ENCODE measurements at regions of chr18 and their contacts with region 1.

Region 1: GRCh38 chr18:45664824-45665763 is 49.8 kb downstream of the SLC14A2 start:
- DNase-seq: peak; percentile 41 to 75 (median 51)
- H3K4me3 ChIP-seq: no peak overlapping the region
- H3K4me3 Mint-ChIP-seq: peak overlapping the region in 5 of 7 donors; percentile 43 to 78 (median 54)
- H3K27ac ChIP-seq: no peak overlapping the region
- H3K27ac Mint-ChIP-seq: peak overlapping the region; percentile 3 to 79 (median 40)
- H3K4me1 ChIP-seq: peaks cover 53% of the 10 kb centered on the region
- H3K4me1 Mint-ChIP-seq: peaks cover 45 to 58% (median 56%) of the 10 kb centered on the region in 3 donors
- H3K27me3 ChIP-seq: no peaks in the 10 kb centered on the region
- H3K27me3 Mint-ChIP-seq: no peaks in the 10 kb centered on the region

Region 2: DNA sequence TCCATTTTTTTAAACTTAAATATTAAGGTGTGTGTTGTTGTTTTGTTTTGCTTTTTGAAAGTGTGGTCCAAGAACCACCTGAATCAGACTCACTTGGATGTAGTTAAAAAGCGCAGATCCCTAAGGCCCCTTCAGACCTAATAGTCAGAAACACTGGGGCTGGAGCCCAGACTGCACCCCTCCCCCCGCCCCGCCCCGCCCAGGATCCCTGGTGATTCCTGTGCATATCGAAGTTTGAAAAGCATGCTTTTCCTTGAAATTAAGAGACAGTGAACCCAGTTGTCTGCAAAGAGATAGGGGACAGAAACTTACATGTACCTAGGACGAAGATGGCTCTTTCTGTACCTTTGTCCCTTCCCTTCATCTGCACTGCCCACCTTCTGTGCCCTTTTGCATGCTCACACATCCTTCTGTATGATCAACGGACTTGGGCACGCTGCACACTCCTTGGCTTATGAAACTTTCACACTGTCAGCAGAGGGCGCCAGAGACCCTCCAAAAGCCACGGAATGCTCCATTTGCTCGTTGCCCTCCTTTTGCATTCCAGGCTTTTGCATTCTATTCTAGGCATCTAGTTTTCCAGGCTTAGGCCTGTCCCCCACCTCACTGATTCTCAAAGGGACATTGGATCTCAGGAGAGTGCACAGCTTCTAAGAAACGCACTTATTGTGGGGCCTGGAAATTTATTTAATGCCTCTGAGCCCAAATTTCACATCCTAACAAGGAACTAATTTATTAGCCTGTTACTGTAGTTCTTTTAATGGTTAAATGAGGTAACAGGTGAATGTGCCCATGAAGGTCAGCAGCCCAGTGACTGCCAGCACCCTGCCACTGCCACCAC is 26.1 kb after region 1 on chr18:
- CTCF ChIA-PET with region 1: interaction called, 230 read pairs
- POLR2A ChIA-PET with region 1: interaction called, 53 read pairs
- DNase-seq: peak; percentile 63 to 81 (median 66)
- H3K4me3 ChIP-seq: no peak overlapping the region
- H3K4me3 Mint-ChIP-seq: peak overlapping the region in 6 of 7 donors; percentile 14 to 75 (median 48)
- H3K27ac ChIP-seq: no peak overlapping the region
- H3K27ac Mint-ChIP-seq: peak overlapping the region in 4 of 8 donors; percentile 57 to 89 (median 69)
- H3K4me1 ChIP-seq: peaks cover 47% of the 10 kb centered on the region
- H3K4me1 Mint-ChIP-seq: peaks cover 38 to 50% (median 49%) of the 10 kb centered on the region in 3 donors
- H3K27me3 ChIP-seq: no peaks in the 10 kb centered on the region
- H3K27me3 Mint-ChIP-seq: no peaks in the 10 kb centered on the region

Region 3: GRCh38 chr18:45722899-45723298 is 57.8 kb after region 1 on chr18:
- CTCF ChIA-PET with region 1: interaction called, 17 read pairs
- POLR2A ChIA-PET with region 1: interaction called, 4 read pairs
- DNase-seq: peak; percentile 32 to 69 (median 34)
- H3K4me3 ChIP-seq: no peak overlapping the region
- H3K4me3 Mint-ChIP-seq: no peak overlapping the region
- H3K27ac ChIP-seq: no peak overlapping the region
- H3K27ac Mint-ChIP-seq: peak overlapping the region in 1 of 8 donors; percentile 54
- H3K4me1 ChIP-seq: peaks cover 3% of the 10 kb centered on the region
- H3K4me1 Mint-ChIP-seq: peaks cover 0 to 3% (median 0%) of the 10 kb centered on the region in 3 donors
- H3K27me3 ChIP-seq: no peaks in the 10 kb centered on the region
- H3K27me3 Mint-ChIP-seq: no peaks in the 10 kb centered on the region

Region 4: DNA sequence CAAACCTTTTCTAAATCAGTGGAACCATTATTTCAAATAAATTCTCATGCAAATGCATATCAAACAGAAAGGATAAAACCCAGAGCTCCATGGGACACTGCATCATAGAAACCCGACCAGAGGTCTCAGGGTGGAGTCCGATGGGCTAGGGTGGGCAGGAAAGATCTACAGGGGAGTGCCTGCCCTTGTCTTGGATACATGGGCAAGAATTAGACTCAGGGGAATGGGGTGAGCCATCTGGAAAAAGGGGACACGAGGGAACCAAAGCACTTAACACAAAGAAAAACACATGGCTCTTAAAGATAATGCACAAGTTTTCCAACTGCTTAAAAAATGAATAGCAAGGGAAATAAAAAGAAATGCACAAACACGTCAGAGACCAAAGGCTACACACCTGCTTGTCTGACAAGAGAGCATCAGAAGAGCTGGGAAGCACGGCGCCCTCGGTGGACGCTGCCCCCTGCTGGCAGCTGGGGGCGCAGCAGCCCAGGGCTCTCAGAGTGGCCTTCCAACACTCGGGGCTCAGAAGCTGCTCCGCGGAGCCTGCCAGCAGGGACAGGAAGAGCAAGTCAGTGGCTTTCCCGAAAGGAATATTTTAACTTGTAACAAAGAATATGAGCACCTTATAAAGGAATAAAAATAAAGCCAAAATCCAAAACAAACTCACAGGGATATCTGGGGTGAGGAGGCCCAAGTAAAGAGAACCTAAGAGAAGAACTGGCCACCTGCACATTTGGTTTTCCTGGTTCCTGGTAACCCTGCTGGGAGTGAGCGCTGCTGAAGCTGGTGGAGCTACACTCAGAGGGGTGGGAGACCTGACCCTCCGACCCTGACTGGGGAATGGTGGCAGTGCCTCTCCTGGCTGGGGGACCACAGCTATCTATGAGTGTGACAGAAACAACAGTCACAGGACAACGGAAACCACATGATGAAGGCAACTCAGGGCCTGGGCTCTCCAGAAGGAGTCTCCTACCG is 214.9 kb after region 1 on chr18:
- CTCF ChIA-PET with region 1: interaction called, 120 read pairs
- POLR2A ChIA-PET with region 1: interaction called, 8 read pairs
- DNase-seq: peak; percentile 53 to 74 (median 57)
- H3K4me3 ChIP-seq: no peak overlapping the region
- H3K4me3 Mint-ChIP-seq: peak overlapping the region in 1 of 7 donors; percentile 0
- H3K27ac ChIP-seq: no peak overlapping the region
- H3K27ac Mint-ChIP-seq: peak overlapping the region in 6 of 8 donors; percentile 4 to 76 (median 46)
- H3K4me1 ChIP-seq: peaks cover 6% of the 10 kb centered on the region
- H3K4me1 Mint-ChIP-seq: peaks cover 12 to 19% (median 15%) of the 10 kb centered on the region in 3 donors
- H3K27me3 ChIP-seq: no peaks in the 10 kb centered on the region
- H3K27me3 Mint-ChIP-seq: no peaks in the 10 kb centered on the region

Region 5: DNA sequence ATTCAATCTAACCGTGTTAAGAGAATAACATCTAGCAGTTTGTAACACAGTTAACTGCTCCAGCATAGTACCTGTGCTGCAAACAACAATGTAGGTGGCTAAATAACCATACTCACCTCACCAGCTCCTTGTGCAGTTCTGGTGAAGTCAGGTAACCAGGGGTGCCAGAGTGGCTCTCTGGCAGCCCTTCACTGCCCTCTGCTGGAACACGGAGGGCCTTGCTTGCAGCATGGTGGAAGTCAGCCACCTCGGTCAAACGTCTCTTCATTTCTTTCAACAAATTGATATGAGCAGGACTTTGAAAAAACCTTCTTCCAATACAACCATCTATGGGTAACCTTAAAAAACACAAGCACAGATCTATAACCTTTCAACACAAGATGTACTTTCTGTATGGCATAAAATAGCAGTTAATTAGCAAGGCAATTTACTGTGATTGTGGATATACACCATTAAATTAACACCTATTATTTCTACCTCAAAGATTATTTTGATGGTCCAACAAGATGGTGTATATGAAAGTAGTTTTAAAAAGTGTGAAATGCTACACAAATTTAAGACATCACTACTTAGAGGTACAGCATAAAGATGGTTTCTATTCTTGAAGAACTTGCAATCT is 245.4 kb after region 1 on chr18:
- CTCF ChIA-PET with region 1: interaction called, 10 read pairs
- POLR2A ChIA-PET with region 1: interaction called, 3 read pairs
- DNase-seq: peak; percentile 32 to 74 (median 34)
- H3K4me3 ChIP-seq: no peak overlapping the region
- H3K4me3 Mint-ChIP-seq: no peak overlapping the region
- H3K27ac ChIP-seq: no peak overlapping the region
- H3K27ac Mint-ChIP-seq: peak overlapping the region in 2 of 8 donors; percentile 9 to 37
- H3K4me1 ChIP-seq: no peaks in the 10 kb centered on the region
- H3K4me1 Mint-ChIP-seq: peaks cover 0 to 4% (median 2%) of the 10 kb centered on the region in 3 donors
- H3K27me3 ChIP-seq: no peaks in the 10 kb centered on the region
- H3K27me3 Mint-ChIP-seq: no peaks in the 10 kb centered on the region

Region 6: DNA sequence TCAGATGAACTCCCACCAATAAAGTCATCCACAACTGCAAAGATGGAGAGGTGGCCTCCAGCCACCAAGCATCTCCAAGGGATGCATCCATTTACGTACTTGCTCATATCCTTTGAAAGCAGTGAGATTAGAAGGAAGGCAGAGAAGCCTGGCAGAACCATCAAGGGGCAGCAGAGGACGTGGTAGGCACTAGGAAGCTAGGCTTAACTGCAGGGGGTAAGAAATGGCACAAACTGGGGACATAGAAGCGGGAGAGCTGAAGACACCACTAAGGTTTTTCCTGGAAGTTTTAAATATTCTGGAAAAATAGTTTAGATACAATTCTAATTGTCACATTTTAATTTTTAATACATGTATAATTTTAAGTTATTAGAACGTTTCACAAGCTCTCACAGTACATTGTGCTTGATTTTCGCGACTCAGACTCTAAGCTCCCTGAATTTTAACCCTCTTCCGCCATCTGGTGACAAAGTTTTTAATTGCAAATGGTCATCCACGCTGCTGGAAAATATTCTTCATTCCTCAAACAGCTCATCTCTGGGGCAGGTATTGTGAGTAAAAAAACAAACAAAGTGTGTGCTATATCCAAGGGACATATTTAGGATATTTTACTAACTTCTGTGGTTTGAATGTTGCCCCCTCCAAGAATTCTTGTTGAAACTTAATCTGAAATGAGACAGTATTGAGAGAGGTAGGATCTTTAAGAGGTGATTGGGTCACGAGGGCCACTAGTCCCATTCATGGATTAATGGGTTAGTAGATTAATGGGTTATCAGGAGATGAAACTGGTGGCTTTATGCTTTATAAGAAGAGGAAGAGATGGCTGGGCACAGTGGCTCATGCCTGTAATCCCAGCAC is 408.6 kb after region 1 on chr18:
- CTCF ChIA-PET with region 1: interaction called, 21 read pairs
- POLR2A ChIA-PET with region 1: no interaction called
- DNase-seq: peak in 4 of 5 donors; percentile 31 to 65 (median 56)
- H3K4me3 ChIP-seq: no peak overlapping the region
- H3K4me3 Mint-ChIP-seq: peak overlapping the region in 5 of 7 donors; percentile 26 to 80 (median 55)
- H3K27ac ChIP-seq: no peak overlapping the region
- H3K27ac Mint-ChIP-seq: peak overlapping the region in 2 of 8 donors; percentile 44 to 77
- H3K4me1 ChIP-seq: peaks cover 45% of the 10 kb centered on the region
- H3K4me1 Mint-ChIP-seq: peaks cover 35 to 40% (median 35%) of the 10 kb centered on the region in 3 donors
- H3K27me3 ChIP-seq: no peaks in the 10 kb centered on the region
- H3K27me3 Mint-ChIP-seq: peaks cover 0 to 1% of the 10 kb centered on the region in 2 donors

Measured in CD8-positive, alpha-beta memory T cell (primary cell).